B cell (primary cell): ENCODE measurements at regions of chr5 and their contacts with region 1.

Region 1: DNA sequence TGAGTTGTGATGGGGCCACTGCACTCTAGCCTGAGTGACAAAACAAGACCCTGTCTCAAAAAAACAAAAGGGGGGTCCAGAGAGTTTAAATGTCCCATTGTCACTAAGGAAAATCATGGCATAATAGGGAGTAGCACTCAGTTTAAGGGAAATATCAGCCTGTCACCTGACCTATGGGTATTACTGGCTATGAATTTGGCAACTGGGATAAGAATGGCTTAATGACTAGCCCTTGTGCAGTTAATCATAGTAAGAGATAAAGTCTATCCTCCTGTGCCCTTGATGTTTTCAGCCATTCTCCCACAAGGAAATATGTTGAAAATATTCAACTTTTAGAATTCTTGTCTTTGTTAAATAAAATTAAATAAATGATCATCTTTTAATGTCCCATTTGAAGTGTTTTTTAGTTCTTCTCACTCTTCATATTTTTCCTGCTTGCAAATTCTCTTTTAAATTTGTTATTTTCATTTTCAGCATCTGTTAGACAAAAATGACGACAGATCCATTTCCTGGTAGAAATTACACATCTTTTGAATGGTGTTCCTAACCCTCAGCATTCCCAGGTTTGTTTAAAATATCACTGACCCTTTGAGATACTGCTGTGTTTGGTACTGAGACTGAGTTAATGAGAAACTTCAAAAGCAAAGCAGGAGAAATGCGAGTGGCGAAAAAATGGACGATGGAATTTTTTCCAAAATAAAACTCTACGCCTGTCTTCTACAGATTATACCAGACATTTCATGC is 191.4 kb downstream of the ARHGAP26 start:
- DNase-seq: no peak
- ATAC-seq: no peak
- H3K4me3 ChIP-seq: no peak overlapping the region
- H3K4me3 Mint-ChIP-seq: no peak overlapping the region
- H3K27ac ChIP-seq: no peak overlapping the region
- H3K27ac Mint-ChIP-seq: no peak overlapping the region
- H3K4me1 ChIP-seq: peaks cover 0 to 7% of the 10 kb centered on the region in 2 donors
- H3K4me1 Mint-ChIP-seq: peaks cover 9% of the 10 kb centered on the region
- H3K27me3 ChIP-seq: no peaks in the 10 kb centered on the region
- H3K27me3 Mint-ChIP-seq: no peaks in the 10 kb centered on the region
- CTCF ChIP-seq: no peak

Region 2: GRCh38 chr5:142946547-142947426 is 14.8 kb before region 1 on chr5:
- CTCF ChIA-PET with region 1: no interaction called
- POLR2A ChIA-PET with region 1: interaction called, 11 read pairs
- intact Hi-C with region 1: no loop called
- DNase-seq: no peak
- ATAC-seq: no peak
- H3K4me3 ChIP-seq: no peak overlapping the region
- H3K4me3 Mint-ChIP-seq: no peak overlapping the region
- H3K27ac ChIP-seq: no peak overlapping the region
- H3K27ac Mint-ChIP-seq: no peak overlapping the region
- H3K4me1 ChIP-seq: peaks cover 0 to 4% of the 10 kb centered on the region in 2 donors
- H3K4me1 Mint-ChIP-seq: peaks cover 8% of the 10 kb centered on the region
- H3K27me3 ChIP-seq: no peaks in the 10 kb centered on the region
- H3K27me3 Mint-ChIP-seq: no peaks in the 10 kb centered on the region
- CTCF ChIP-seq: no peak